ENCODE measurements at regions of chr1 and their contacts with region 1.

Region 1: DNA sequence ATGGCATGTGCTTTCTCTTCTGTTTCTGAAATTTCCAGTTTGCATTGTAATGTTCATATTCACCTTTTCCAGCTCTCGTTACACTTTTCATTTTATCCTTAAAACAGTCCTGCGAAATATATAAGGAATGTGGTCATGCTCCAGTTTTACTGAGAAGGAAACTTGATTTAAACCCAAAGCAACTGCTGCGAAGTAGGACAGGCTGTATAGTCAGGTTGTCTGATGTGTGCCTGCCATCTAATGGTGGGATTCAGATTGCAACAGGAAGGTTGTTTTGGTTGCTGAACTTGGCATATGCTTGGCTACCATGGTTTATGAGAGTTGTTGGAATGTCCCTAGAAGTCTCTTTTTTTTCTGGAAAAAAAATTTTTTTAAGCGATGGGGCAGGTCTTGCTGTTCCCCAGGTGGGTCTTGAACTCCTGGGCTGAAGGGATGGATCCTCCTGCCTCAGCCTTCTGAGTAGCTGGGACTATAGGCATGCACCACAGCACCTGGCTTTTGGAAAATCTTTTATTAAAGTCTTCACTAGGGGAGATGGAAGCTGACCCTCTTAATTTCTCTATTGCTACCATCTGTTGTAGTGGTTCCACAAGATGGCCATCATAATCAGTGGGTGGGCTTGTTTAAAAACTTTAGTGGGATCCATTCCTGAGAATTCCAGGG is 86.9 kb downstream of the UCK2 start:
- ATAC-seq: peak; percentile 71 to 95 (median 86)
- H3K4me3 ChIP-seq: no peak overlapping the region
- H3K27ac ChIP-seq: no peak overlapping the region
- H3K4me1 ChIP-seq: no peaks in the 10 kb centered on the region

Region 2: GRCh38 chr1:165392634-165393571 is 521.4 kb before region 1 on chr1:
- in situ Hi-C with region 1: loop called in 3 of 9 experiments (anchors 25 kb)
- ATAC-seq: peak; percentile 96 to 100 (median 100)
- H3K4me3 ChIP-seq: peak overlapping the region; percentile 9 to 32 (median 23)
- H3K27ac ChIP-seq: no peak overlapping the region
- H3K4me1 ChIP-seq: peaks cover 3 to 4% of the 10 kb centered on the region in 2 donors

Region 3: GRCh38 chr1:165403835-165404482 is 510.3 kb before region 1 on chr1:
- in situ Hi-C with region 1: loop called in 6 of 9 experiments (anchors 25 kb)
- ATAC-seq: peak; percentile 53 to 83 (median 69)
- H3K4me3 ChIP-seq: no peak overlapping the region
- H3K27ac ChIP-seq: no peak overlapping the region
- H3K4me1 ChIP-seq: no peaks in the 10 kb centered on the region

Region 4: GRCh38 chr1:165597883-165598675 is 316.2 kb before region 1 on chr1:
- in situ Hi-C with region 1: loop called (anchors 5 to 25 kb)
- ATAC-seq: peak; percentile 96 to 100 (median 99)
- H3K4me3 ChIP-seq: peak overlapping the region; percentile 41 to 54 (median 46)
- H3K27ac ChIP-seq: peak overlapping the region; percentile 52 to 53
- H3K4me1 ChIP-seq: peaks cover 4 to 9% of the 10 kb centered on the region in 2 donors

Region 5: GRCh38 chr1:165717918-165718515 is 196.2 kb before region 1 on chr1:
- in situ Hi-C with region 1: loop called in 2 of 9 experiments (anchors 25 kb)
- ATAC-seq: peak in 3 of 8 experiments; percentile 51 to 72 (median 64)
- H3K4me3 ChIP-seq: no peak overlapping the region
- H3K27ac ChIP-seq: no peak overlapping the region
- H3K4me1 ChIP-seq: no peaks in the 10 kb centered on the region

Region 6: GRCh38 chr1:165768513-165769394 is 145.5 kb before region 1 on chr1 and contains the start of gene TMCO1:
- in situ Hi-C with region 1: loop called in 1 of 9 experiments (anchors 25 kb)
- ATAC-seq: peak; percentile 98 to 100 (median 99)
- H3K4me3 ChIP-seq: peak within 1 kb of the TSS; percentile 55 to 91 (median 67)
- H3K27ac ChIP-seq: peak within 1 kb of the TSS; percentile 81 to 91
- H3K4me1 ChIP-seq: peaks cover 13 to 16% of the 10 kb centered on the region in 2 donors
- total RNA-seq, gene TMCO1: 57.6 to 149 (median 100) TPM

Measured in motor neuron (in vitro differentiated cells).